ENCODE measurements at regions of chr17 and their contacts with region 1.

Region 1: DNA sequence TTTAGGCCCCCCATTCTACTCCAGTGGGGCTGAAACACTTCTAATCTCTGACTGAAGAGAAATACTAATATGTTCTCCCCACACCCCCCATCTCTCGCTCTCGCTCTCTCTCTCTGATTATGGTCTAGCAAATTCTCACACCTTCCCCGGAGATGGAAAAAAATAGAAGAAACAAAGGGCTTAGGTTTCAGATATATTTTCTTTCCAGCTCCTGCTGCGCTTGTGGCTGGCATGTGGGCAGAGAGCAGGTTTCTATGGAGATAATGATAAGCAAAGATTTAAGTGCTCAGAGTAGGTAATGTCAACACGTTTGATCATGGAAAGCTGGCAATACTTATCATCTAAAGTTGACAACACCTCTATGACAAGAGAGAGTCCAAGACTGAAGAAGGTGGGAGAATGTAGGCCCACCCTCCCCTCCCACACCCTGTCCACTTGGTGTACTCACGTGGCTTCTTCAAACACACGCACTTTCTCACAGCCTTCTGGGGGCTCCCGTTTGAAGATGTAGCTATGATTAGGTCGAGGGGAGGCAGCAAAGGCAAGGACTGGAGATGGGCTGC is 8.0 kb upstream of the SLC35B1 start:
- DNase-seq: no peak
- ATAC-seq: no peak
- H3K4me3 ChIP-seq: no peak overlapping the region
- H3K27ac ChIP-seq: no peak overlapping the region
- H3K4me1 ChIP-seq: no peaks in the 10 kb centered on the region
- H3K27me3 ChIP-seq: no peaks in the 10 kb centered on the region
- CTCF ChIP-seq: no peak

Region 2: DNA sequence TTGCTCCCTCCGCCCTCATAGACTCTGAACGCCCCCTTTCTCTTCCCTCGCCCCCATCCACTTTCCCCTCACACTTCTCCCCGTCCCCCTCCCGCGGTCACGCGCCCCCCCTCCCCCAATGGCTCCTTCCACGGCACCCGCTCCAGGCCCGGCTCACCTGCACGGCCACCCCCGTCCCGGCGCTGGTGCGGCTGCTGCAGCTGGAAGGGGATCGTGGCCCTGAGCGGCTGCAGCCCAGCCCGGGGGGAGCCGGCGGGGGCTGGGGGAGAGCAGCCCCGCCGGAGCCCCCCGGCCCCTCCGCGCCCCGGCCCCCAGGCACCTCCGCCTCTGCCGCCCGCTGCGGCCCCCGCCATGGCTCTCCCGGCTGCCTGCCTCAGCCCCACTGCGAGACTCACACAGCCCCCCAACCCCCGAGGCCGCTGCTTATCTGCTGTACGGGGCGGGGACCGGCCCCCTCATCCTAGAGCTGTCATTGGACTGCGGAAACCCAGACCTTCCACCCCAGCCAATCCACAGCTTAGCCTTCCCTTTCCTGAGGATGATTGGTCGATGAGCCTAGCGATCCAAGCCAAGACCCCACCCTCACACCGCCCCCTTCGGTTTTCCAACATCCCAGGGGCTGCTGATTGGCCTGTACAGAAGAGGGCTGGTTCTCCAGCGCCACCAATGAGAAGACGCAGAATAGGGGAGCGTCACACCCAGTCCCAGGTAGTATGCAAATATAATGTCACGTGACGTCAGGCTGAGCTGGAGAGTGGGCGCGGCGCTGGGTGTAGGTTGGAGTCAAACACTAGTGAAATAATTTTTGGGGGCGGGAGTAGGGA is 48.1 kb after region 1 on chr17 and contains the start of gene FAM117A:
- intact Hi-C with region 1: loop called (anchors 5 kb)
- DNase-seq: peak; percentile 96
- ATAC-seq: peak; percentile 99
- H3K4me3 ChIP-seq: peak within 1 kb of the TSS; percentile 67
- H3K27ac ChIP-seq: peak within 1 kb of the TSS; percentile 55
- H3K4me1 ChIP-seq: peaks cover 4% of the 10 kb centered on the region
- H3K27me3 ChIP-seq: no peaks in the 10 kb centered on the region
- CTCF ChIP-seq: no peak
- total RNA-seq, gene FAM117A: 11.8 TPM